Dorsolateral prefrontal cortex (tissue), 120 donors: ENCODE measurements at regions of chr13 and their contacts with region 1.

Region 1: GRCh38 chr13:19863323-19864023 is at the start of gene ZMYM5:
- DNase-seq: peak; percentile 96 to 100 (median 99)
- H3K4me3 ChIP-seq: peak within 1 kb of the TSS; percentile 60 to 97 (median 90)
- H3K27ac ChIP-seq: peak within 1 kb of the TSS; percentile 95 to 100 (median 99)
- H3K27me3 ChIP-seq: no peaks in the 10 kb centered on the region
- CTCF ChIP-seq: peak in 23 of 56 donors; percentile 1 to 35 (median 22)
- total RNA-seq, gene ZMYM5: 12.5 to 32.2 (median 21.1) TPM

Region 2: DNA sequence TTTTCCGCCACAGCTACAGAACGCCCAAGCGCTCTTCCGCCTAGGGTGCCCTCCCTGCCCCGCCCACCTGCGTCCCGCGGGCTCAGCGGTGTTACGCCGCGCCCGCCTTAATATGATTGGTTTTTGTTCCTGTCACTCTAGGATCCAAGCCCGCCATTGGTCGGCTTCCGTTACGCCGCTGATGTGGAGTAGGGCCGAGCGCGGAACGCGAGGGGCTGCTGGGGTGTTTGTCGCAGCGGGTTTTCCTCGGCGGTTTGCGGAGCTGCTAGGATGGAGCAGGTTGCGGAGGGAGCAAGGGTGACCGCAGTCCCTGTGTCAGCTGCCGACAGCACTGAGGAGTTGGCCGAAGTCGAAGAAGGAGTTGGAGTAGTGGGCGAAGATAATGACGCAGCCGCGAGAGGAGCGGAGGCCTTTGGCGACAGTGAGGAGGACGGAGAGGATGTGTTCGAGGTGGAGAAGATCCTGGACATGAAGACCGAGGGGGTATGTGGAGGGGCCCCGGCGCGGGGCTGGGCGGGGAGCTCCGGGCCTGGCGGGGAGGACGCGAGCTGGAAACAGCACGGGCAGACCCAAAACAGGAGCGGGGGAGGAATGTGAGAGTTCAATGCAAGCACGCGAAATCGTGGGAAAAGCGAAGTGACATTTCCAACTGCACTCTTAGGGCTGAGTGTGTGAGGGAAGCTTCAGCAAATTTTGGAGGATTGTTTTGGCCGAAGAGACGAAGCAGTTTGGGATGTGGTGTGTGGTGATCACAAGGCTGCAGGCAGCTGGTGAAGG is 229.8 kb before region 1 on chr13 and contains the start of gene MPHOSPH8:
- intact Hi-C with region 1: loop called (anchors 5 to 10 kb)
- DNase-seq: peak; percentile 88 to 95 (median 93)
- H3K4me3 ChIP-seq: peak within 1 kb of the TSS; percentile 60 to 98 (median 89)
- H3K27ac ChIP-seq: peak within 1 kb of the TSS; percentile 49 to 98 (median 91)
- H3K27me3 ChIP-seq: no peaks in the 10 kb centered on the region
- CTCF ChIP-seq: peak in 14 of 56 donors; percentile 5 to 58 (median 20)
- total RNA-seq, gene MPHOSPH8: 55.4 to 102 (median 72.7) TPM

Region 3: GRCh38 chr13:19782049-19782726 is 81.3 kb before region 1 on chr13:
- intact Hi-C with region 1: loop called (anchors 1 to 2 kb)
- DNase-seq: peak; percentile 39 to 72 (median 52)
- H3K4me3 ChIP-seq: peak overlapping the region; percentile 62 to 100 (median 94)
- H3K27ac ChIP-seq: peak overlapping the region; percentile 68 to 98 (median 93)
- H3K27me3 ChIP-seq: no peaks in the 10 kb centered on the region
- CTCF ChIP-seq: peak in 3 of 56 donors; percentile 9 to 15 (median 10)

Region 4: DNA sequence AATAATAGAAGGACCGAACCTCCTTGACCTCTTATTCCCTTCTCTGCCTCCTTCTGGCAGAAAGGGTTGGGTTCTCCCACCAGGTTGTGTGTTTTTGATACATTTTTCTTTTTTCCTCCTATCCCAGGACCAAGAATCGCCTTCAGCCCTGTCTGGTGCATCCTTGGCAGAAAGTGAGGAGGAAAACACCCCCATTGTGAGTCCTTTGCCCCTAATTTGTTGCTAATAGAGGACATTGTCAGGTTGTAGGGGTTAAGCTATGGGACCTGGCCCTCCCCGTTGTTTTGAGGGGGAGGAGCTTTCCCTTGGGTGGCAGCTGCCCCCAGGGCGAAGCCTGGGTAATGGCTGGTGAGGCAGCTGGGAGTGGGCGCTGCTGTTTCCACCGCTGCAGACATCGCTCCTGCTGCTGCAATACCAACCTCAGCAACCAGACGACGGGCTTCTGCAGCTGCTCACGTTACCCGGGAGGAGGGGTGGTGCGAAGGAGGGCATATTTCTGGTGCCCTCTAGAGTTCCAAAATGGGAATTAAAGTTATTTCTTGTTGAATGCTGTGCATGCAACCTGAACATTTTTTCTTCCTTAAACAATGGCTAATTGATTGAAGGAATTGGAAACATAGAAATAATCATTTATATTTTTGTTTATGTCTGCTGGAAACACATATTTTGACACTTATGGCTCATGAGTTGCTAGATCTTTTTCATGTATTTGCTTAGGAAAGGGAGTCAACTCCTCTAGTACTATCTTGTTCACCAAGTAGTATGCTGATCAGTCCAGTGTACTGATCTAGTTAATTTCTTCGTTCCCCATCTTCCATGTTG is 96.6 kb after region 1 on chr13:
- intact Hi-C with region 1: loop called (anchors 1 kb)
- DNase-seq: peak; percentile 63 to 91 (median 84)
- H3K4me3 ChIP-seq: peak overlapping the region; percentile 62 to 95 (median 84)
- H3K27ac ChIP-seq: peak overlapping the region; percentile 89 to 100 (median 99)
- H3K27me3 ChIP-seq: no peaks in the 10 kb centered on the region
- CTCF ChIP-seq: peak; percentile 75 to 96 (median 91)

Region 5: GRCh38 chr13:20037908-20038307 is 174.4 kb after region 1 on chr13:
- intact Hi-C with region 1: no loop called
- DNase-seq: no peak
- H3K4me3 ChIP-seq: no peak overlapping the region
- H3K27ac ChIP-seq: no peak overlapping the region
- H3K27me3 ChIP-seq: no peaks in the 10 kb centered on the region
- CTCF ChIP-seq: no peak

Region 6: DNA sequence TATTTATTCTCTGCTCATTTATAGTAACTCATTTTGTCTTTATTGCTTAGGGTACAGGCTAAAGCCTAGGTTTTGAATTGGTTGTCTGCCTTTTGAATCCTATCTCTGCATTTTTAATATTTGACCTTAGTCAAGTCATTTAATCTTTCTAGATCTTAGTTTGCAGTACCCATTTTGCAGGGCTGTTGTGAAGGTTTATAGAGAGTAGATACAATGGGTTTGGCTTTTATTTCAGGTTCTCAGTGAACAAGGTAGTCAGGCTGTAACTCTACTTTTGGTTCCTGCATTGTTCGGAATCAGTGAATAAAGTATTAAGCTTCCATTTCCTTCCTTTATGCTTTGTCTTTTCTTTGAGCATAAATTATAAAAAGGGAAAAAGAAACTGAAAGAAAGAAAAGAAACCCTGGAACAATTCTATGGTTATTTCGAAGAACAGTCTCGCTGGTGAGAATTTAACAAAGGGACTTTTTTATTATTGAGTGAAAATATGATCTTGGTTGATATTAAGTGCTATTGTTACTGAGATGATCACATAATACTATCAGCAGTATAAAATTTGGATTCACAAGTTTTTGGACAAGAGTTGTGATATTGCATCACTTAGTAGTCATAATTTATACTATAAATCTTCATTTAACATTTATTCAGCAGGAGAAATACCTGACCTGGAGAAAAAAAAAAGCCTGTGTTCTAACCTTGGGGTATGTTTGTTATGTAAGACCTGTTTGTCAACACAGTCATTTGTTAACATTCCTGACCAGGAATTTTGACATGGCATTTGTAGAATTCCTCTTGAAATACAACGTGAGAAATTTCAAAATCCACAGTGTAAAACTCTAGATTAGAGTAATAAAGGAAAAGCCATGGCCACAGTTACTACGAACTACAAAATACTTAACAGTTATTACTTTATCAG is 186.3 kb after region 1 on chr13:
- intact Hi-C with region 1: loop called in 1 of 2 experiments (anchors 5 kb)
- DNase-seq: no peak
- H3K4me3 ChIP-seq: peak overlapping the region in 9 of 59 donors; percentile 1 to 42 (median 7)
- H3K27ac ChIP-seq: peak overlapping the region in 9 of 59 donors; percentile 1 to 47 (median 30)
- H3K27me3 ChIP-seq: no peaks in the 10 kb centered on the region
- CTCF ChIP-seq: no peak